GM12878 (cell line): ENCODE measurements at regions of chr5 and their contacts with region 1.

Region 1: GRCh38 chr5:127030259-127031146 is at the start of gene MARCHF3:
- DNase-seq: peak; percentile 87
- ATAC-seq: peak; percentile 92
- H3K4me3 ChIP-seq: peak within 1 kb of the TSS; percentile 89
- H3K27ac ChIP-seq: peak within 1 kb of the TSS; percentile 46; the same call in 1 of the 2 replicates
- H3K4me1 ChIP-seq: peaks cover 6% of the 10 kb centered on the region
- H3K27me3 ChIP-seq: no peaks in the 10 kb centered on the region
- CTCF ChIP-seq: peak in 2 of 3 experiments; percentile 8 to 18; a peak in 2 of 6 replicates
- EP300 ChIP-seq: no peak
- POLR2A ChIP-seq: peak; percentile 95
- RAD21 ChIP-seq: no peak
- polyA plus RNA-seq, gene MARCHF3: 3.6 to 6.4 TPM

Region 2: GRCh38 chr5:126846344-126846743 is 184.2 kb before region 1 on chr5:
- CTCF ChIA-PET with region 1: no interaction called
- POLR2A ChIA-PET with region 1: interaction called, 4 read pairs
- RAD21 ChIA-PET with region 1: no interaction called
- SMC1A ChIA-PET with region 1: interaction called, 3 read pairs
- in situ Hi-C with region 1: no loop called
- intact Hi-C with region 1: loop called (anchors 10 kb)
- DNase-seq: no peak
- ATAC-seq: no peak
- H3K4me3 ChIP-seq: no peak overlapping the region
- H3K27ac ChIP-seq: no peak overlapping the region
- H3K4me1 ChIP-seq: no peaks in the 10 kb centered on the region; the same call in 1 of the 2 replicates
- H3K27me3 ChIP-seq: no peaks in the 10 kb centered on the region
- CTCF ChIP-seq: peak in 1 of 3 experiments; percentile 18; a peak in 1 of 6 replicates
- EP300 ChIP-seq: no peak
- POLR2A ChIP-seq: no peak
- RAD21 ChIP-seq: peak; percentile 19; the same call in 1 of the 2 replicates

Region 3: DNA sequence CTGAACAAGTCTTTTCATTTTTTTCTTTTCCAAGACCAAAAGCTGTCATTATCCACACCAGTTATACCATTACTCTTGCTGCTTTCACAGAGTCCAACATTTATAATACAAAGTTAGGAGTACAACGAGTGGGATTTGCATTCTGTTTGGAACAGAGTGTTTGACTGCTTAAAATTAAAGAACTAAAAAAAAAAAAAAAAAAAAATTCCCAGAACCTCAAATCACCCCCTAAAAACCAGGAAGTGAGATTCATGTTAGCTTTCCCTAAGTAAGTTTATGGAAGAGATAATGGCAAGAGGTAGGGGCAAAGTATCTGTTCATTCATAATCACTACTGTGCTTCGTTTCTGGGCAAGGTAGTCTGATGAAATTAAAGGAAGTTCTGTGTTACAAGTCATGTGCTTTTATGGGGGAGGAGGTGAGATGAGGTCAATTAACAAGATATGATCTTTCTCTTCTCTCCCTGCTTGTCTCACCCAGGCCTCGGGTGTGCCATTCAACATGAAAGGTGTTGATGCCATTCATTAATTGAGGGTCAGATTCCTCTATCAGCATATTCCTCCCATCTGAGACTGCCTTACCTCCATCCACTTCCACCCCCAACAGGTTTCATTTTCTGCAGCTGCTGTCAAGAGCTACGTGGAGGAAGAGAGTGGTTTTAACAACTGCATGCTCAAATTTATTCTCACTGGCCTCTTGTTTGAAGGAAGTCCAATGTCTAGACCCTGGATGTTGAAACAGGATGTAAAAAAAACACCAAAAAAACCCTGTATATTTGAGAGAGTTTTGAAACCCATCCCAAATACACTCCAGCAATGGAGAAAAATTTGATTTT is 58.2 kb before region 1 on chr5:
- CTCF ChIA-PET with region 1: interaction called, 4 read pairs
- POLR2A ChIA-PET with region 1: interaction called, 7 read pairs
- RAD21 ChIA-PET with region 1: interaction called, 28 read pairs
- SMC1A ChIA-PET with region 1: interaction called, 26 read pairs
- in situ Hi-C with region 1: no loop called
- intact Hi-C with region 1: loop called (anchors 2 kb)
- DNase-seq: peak; percentile 76
- ATAC-seq: peak; percentile 83
- H3K4me3 ChIP-seq: no peak overlapping the region
- H3K27ac ChIP-seq: peak overlapping the region; percentile 78
- H3K4me1 ChIP-seq: peaks cover 34% of the 10 kb centered on the region
- H3K27me3 ChIP-seq: no peaks in the 10 kb centered on the region
- CTCF ChIP-seq: no peak
- EP300 ChIP-seq: peak; percentile 54 to 55; a peak in 3 of 4 replicates
- POLR2A ChIP-seq: no peak
- RAD21 ChIP-seq: no peak

Region 4: GRCh38 chr5:126998201-126998631 is 32.3 kb before region 1 on chr5:
- CTCF ChIA-PET with region 1: interaction called, 10 read pairs
- POLR2A ChIA-PET with region 1: interaction called, 6 read pairs
- RAD21 ChIA-PET with region 1: interaction called, 13 read pairs
- SMC1A ChIA-PET with region 1: interaction called, 29 read pairs
- in situ Hi-C with region 1: no loop called
- intact Hi-C with region 1: no loop called
- DNase-seq: peak; percentile 35
- ATAC-seq: peak; percentile 88
- H3K4me3 ChIP-seq: no peak overlapping the region
- H3K27ac ChIP-seq: peak overlapping the region; percentile 46
- H3K4me1 ChIP-seq: peaks cover 5% of the 10 kb centered on the region
- H3K27me3 ChIP-seq: no peaks in the 10 kb centered on the region
- CTCF ChIP-seq: peak in 1 of 3 experiments; percentile 27; a peak in 2 of 6 replicates
- EP300 ChIP-seq: no peak
- POLR2A ChIP-seq: no peak
- RAD21 ChIP-seq: peak; percentile 56

Region 5: DNA sequence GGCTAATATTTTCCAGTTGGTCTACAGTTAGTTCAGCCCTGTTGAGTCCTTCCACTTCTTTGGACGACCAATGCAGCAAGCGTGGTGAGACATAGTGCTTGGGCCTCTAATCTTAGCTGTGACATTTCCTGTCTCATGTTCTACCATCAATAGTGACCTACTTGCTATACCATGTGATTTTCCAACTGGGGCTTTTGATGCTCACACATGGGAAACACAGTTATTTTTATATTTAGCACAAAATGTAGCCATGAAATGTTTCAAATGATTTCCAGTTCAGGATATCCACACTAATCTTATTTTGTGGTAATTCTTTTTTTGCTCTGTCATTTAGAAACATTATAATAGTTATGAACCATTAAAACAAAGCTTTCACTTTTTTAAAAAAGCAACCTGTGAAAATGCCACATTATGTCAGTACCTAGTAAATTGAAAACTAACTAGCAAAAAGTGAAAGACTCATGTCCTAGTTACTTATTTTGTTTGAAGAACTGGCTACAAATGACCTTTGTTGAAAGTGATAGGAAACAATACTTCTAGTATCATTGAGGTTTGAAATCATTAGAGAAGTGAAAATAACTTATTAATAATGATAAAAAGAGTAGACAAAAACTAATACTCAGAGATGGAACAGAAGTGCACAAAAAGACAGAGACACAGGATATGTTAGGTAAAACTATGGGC is 18.4 kb before region 1 on chr5:
- CTCF ChIA-PET with region 1: interaction called, 32 read pairs
- POLR2A ChIA-PET with region 1: interaction called, 114 read pairs
- RAD21 ChIA-PET with region 1: interaction called, 107 read pairs
- SMC1A ChIA-PET with region 1: interaction called, 156 read pairs
- in situ Hi-C with region 1: no loop called
- intact Hi-C with region 1: loop called (anchors 2 kb)
- DNase-seq: peak; percentile 66
- ATAC-seq: peak; percentile 85
- H3K4me3 ChIP-seq: no peak overlapping the region
- H3K27ac ChIP-seq: peak overlapping the region; percentile 65
- H3K4me1 ChIP-seq: peaks cover 25% of the 10 kb centered on the region
- H3K27me3 ChIP-seq: no peaks in the 10 kb centered on the region
- CTCF ChIP-seq: no peak
- EP300 ChIP-seq: peak; percentile 73 to 87; a peak in 2 of 4 replicates
- POLR2A ChIP-seq: 0 out of 2 replicates have a peak, but pooled peaks have one; percentile 20
- RAD21 ChIP-seq: no peak

Region 6: DNA sequence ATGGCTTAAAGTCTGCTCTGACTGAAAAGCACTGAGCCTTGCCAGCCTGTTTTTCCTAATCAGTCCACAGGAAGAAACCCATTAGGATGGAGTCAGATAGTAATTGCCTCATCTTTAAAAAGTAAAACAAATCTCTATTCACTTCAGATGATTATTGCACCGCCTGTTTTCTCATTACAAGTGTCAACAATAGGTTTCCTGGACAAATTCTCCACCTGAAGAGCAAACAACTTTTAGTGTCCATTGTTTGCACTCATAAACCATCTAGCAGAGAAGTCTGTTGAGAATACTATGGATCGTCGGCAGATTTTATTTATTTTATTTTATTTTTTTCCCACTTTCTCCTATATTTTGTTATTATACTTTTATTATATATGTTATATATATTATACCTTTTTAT is 22.5 kb after region 1 on chr5:
- CTCF ChIA-PET with region 1: no interaction called
- POLR2A ChIA-PET with region 1: no interaction called
- RAD21 ChIA-PET with region 1: no interaction called
- SMC1A ChIA-PET with region 1: no interaction called
- in situ Hi-C with region 1: no loop called
- intact Hi-C with region 1: no loop called
- DNase-seq: no peak
- ATAC-seq: no peak
- H3K4me3 ChIP-seq: no peak overlapping the region
- H3K27ac ChIP-seq: no peak overlapping the region
- H3K4me1 ChIP-seq: no peaks in the 10 kb centered on the region
- H3K27me3 ChIP-seq: no peaks in the 10 kb centered on the region
- CTCF ChIP-seq: no peak
- EP300 ChIP-seq: no peak
- POLR2A ChIP-seq: no peak
- RAD21 ChIP-seq: no peak

Region 7: GRCh38 chr5:127072861-127073846 is 42.7 kb after region 1 on chr5 and contains the start of gene C5orf63:
- CTCF ChIA-PET with region 1: interaction called, 6 read pairs
- POLR2A ChIA-PET with region 1: interaction called, 5 read pairs
- RAD21 ChIA-PET with region 1: interaction called, 12 read pairs
- SMC1A ChIA-PET with region 1: interaction called, 3 read pairs
- in situ Hi-C with region 1: no loop called
- intact Hi-C with region 1: no loop called
- DNase-seq: peak; percentile 17
- ATAC-seq: peak; percentile 97
- H3K4me3 ChIP-seq: peak within 1 kb of the TSS; percentile 77
- H3K27ac ChIP-seq: peak within 1 kb of the TSS; percentile 58
- H3K4me1 ChIP-seq: no peaks in the 10 kb centered on the region
- H3K27me3 ChIP-seq: no peaks in the 10 kb centered on the region
- CTCF ChIP-seq: 0 out of 6 replicates have a peak, but pooled peaks of 1 of the 3 experiments have one; percentile 12
- EP300 ChIP-seq: no peak
- POLR2A ChIP-seq: peak; percentile 88
- RAD21 ChIP-seq: no peak
- polyA plus RNA-seq, gene C5orf63: 48.5 to 54.3 TPM